Naive thymus-derived CD4-positive, alpha-beta T cell (primary cell): ENCODE measurements at regions of chr18 and their contacts with region 1.

Region 1: GRCh38 chr18:72866901-72867701 is 686 bp downstream of the NETO1 start:
- DNase-seq: no peak
- ATAC-seq: no peak
- H3K4me3 ChIP-seq: no peak overlapping the region
- H3K4me3 Mint-ChIP-seq: peak overlapping the region in 2 of 10 donors; percentile 14 to 65
- H3K27ac ChIP-seq: no peak overlapping the region
- H3K27ac Mint-ChIP-seq: no peak overlapping the region
- H3K4me1 ChIP-seq: no peaks in the 10 kb centered on the region
- H3K4me1 Mint-ChIP-seq: peaks cover 0 to 5% (median 2%) of the 10 kb centered on the region in 7 donors
- H3K27me3 ChIP-seq: no peaks in the 10 kb centered on the region
- H3K27me3 Mint-ChIP-seq: peaks cover 34 to 40% (median 39%) of the 10 kb centered on the region in 5 donors

Region 2: GRCh38 chr18:72544092-72544886 is 322.8 kb before region 1 on chr18 and contains the start of gene CBLN2:
- CTCF ChIA-PET with region 1: no interaction called
- POLR2A ChIA-PET with region 1: no interaction called
- intact Hi-C with region 1: loop called in 1 of 2 experiments (anchors 10 kb)
- DNase-seq: peak in 1 of 9 donors; percentile 52
- ATAC-seq: no peak
- H3K4me3 ChIP-seq: no peak within 1 kb of the TSS
- H3K4me3 Mint-ChIP-seq: peak within 1 kb of the TSS in 8 of 10 donors; percentile 6 to 75 (median 42)
- H3K27ac ChIP-seq: no peak within 1 kb of the TSS
- H3K27ac Mint-ChIP-seq: peak within 1 kb of the TSS in 1 of 9 donors; percentile 5
- H3K4me1 ChIP-seq: no peaks in the 10 kb centered on the region
- H3K4me1 Mint-ChIP-seq: peaks cover 5 to 18% (median 12%) of the 10 kb centered on the region in 7 donors
- H3K27me3 ChIP-seq: no peaks in the 10 kb centered on the region
- H3K27me3 Mint-ChIP-seq: peaks cover 39 to 51% (median 44%) of the 10 kb centered on the region in 5 donors
- total RNA-seq, gene CBLN2: not detected